Natural killer cell (primary cell): ENCODE measurements at regions of chr2 and their contacts with region 1.

Region 1: GRCh38 chr2:231706731-231707624 is 1.3 kb upstream of the PTMA start:
- DNase-seq: peak; percentile 97 to 98
- ATAC-seq: peak; percentile 37 to 64 (median 50)
- H3K4me3 ChIP-seq: peak overlapping the region; percentile 85
- H3K4me3 Mint-ChIP-seq: peak overlapping the region; percentile 98
- H3K27ac ChIP-seq: peak overlapping the region; percentile 95
- H3K27ac Mint-ChIP-seq: peak overlapping the region; percentile 97 to 100
- H3K4me1 ChIP-seq: peaks cover 34% of the 10 kb centered on the region
- H3K4me1 Mint-ChIP-seq: peaks cover 24 to 37% of the 10 kb centered on the region in 2 donors
- H3K27me3 ChIP-seq: no peaks in the 10 kb centered on the region
- H3K27me3 Mint-ChIP-seq: peaks cover 0 to 6% of the 10 kb centered on the region in 2 donors
- CTCF ChIP-seq: peak; percentile 92

Region 2: GRCh38 chr2:231463698-231464575 is 243.0 kb before region 1 on chr2 and contains the start of gene NCL:
- intact Hi-C with region 1: loop called (anchors 5 kb)
- DNase-seq: peak; percentile 73 to 93
- ATAC-seq: peak; percentile 61 to 74 (median 64)
- H3K4me3 ChIP-seq: peak within 1 kb of the TSS; percentile 85
- H3K4me3 Mint-ChIP-seq: peak within 1 kb of the TSS; percentile 92
- H3K27ac ChIP-seq: peak within 1 kb of the TSS; percentile 98
- H3K27ac Mint-ChIP-seq: peak within 1 kb of the TSS; percentile 99 to 100
- H3K4me1 ChIP-seq: peaks cover 26% of the 10 kb centered on the region
- H3K4me1 Mint-ChIP-seq: peaks cover 52 to 58% of the 10 kb centered on the region in 2 donors
- H3K27me3 ChIP-seq: no peaks in the 10 kb centered on the region
- H3K27me3 Mint-ChIP-seq: no peaks in the 10 kb centered on the region
- CTCF ChIP-seq: no peak
- total RNA-seq, gene NCL: 485 to 540 (median 529) TPM

Region 3: DNA sequence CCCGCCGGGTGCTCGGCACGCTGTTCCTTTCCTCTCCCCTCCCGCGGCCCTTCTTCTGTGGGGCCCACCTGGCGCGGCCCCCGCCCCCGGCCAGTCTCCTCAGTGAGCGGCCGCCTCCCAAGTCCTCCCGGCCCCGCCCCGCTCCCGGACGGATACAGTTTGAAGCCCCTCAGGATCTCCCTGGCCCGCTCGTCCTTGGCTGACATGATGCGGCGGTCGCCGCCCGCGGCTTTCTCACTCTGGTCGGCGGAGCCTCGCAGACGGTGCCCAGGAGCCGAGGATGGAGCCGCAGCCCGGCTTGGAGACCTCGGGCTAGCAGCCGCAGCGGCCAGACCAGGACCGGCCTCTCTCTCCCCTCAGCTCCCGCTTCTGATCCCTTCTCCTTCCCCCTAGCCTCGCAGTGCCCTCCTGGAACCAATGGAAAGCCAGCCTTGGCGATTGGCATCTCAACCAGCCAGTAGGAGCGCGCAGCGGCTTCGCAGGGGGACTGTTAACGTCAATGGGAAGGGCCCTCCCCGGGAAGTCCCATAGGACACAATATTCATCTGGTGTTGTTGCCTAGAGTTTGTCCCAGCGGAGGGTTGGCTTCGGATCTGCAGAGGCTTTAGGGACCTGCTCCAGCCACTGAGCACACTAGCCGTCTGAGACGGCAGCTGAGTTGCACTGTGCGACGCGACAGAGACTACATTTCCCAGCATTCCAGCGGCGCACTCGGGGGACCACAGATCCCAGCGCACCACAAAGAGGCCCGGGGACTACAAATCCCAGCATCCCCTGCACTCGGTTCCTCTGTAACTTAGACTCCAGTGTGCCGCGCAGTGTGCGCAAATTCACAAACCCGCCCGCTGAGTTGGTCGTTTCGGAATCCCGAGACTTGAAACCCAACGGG is 74.2 kb after region 1 on chr2 and contains the start of gene PDE6D:
- intact Hi-C with region 1: loop called (anchors 2 kb)
- DNase-seq: peak; percentile 97 to 98
- ATAC-seq: peak; percentile 90 to 96 (median 93)
- H3K4me3 ChIP-seq: peak within 1 kb of the TSS; percentile 86
- H3K4me3 Mint-ChIP-seq: peak within 1 kb of the TSS; percentile 98
- H3K27ac ChIP-seq: peak within 1 kb of the TSS; percentile 89
- H3K27ac Mint-ChIP-seq: peak within 1 kb of the TSS; percentile 98
- H3K4me1 ChIP-seq: peaks cover 18% of the 10 kb centered on the region
- H3K4me1 Mint-ChIP-seq: peaks cover 54 to 63% of the 10 kb centered on the region in 2 donors
- H3K27me3 ChIP-seq: no peaks in the 10 kb centered on the region
- H3K27me3 Mint-ChIP-seq: no peaks in the 10 kb centered on the region
- CTCF ChIP-seq: no peak
- total RNA-seq, gene PDE6D: 21.6 to 29.2 (median 22.8) TPM